ENCODE measurements at regions of chr9 and their contacts with region 1.

Region 1: DNA sequence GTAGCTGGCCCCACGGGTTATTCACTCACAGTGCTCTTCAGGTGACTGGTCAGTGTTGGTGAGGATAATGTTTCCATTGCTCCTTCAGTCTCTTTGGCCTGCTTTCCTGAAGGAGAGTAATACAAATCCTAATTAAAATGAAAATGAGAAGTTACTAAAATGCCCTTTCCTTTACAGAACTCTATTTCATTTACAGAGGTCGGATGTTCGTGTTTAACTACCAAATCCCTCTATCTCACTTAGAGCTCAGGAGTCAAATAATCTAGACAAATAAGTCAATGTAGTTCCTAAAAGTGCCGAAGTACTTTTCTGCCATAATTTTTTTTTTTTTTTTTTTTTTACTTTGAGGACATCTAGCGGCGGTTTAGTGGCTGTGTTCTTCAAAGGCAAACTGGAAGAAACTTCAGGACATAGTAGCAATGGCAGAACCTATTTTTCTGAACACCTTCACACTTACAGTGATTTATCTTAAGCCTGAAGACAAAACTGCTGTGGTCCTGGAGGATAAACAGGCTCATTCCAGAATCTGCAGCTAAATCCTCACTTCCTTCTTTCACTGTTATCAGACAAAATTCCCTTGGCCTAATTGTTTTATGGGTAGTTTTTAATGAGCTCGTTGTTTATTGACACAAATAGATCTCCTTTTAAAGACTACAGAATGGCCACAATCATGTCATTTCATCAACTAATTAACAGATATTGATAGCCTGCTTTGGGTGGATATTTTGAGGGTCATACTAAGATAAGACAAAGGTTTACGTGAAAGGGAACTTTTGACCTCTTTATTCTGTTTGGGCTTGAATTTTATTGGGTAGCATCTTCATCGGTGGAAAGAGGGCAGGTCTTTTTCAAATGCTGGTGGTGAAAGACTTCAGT is 207.6 kb upstream of the DMRTA1 start:
- DNase-seq: peak; percentile 33
- H3K4me3 Mint-ChIP-seq: peak overlapping the region; percentile 50
- H3K27ac Mint-ChIP-seq: peak overlapping the region; percentile 86
- H3K4me1 Mint-ChIP-seq: peaks cover 37% of the 10 kb centered on the region
- H3K27me3 Mint-ChIP-seq: no peaks in the 10 kb centered on the region
- CTCF ChIP-seq: no peak

Region 2: GRCh38 chr9:21465859-21466518 is 773.1 kb before region 1 on chr9:
- CTCF ChIA-PET with region 1: interaction called, 26 read pairs
- POLR2A ChIA-PET with region 1: interaction called, 3 read pairs
- intact Hi-C with region 1: loop called (anchors 10 kb)
- DNase-seq: peak; percentile 47
- H3K4me3 Mint-ChIP-seq: no peak overlapping the region
- H3K27ac Mint-ChIP-seq: no peak overlapping the region
- H3K4me1 Mint-ChIP-seq: no peaks in the 10 kb centered on the region
- H3K27me3 Mint-ChIP-seq: no peaks in the 10 kb centered on the region
- CTCF ChIP-seq: peak; percentile 38

Region 3: DNA sequence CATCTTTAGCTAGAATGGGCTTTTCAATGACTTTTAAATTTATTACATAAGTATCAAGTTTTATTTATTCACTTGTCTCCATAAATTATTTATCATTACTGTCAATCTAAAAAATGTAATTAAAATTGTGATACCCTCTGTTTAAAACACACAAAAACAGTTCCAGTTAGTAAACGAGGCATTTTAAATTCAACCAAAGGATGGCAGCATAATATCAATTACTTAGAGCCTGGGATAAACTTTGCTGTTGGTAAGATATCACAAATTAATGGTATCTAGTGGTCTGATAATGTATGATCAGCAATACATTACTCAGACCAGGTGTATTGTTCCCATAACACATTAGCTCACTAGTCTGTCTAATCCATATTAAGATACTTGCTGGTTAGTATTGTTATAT is 747.3 kb before region 1 on chr9:
- CTCF ChIA-PET with region 1: interaction called, 13 read pairs
- POLR2A ChIA-PET with region 1: no interaction called
- intact Hi-C with region 1: loop called (anchors 10 kb)
- DNase-seq: no peak
- H3K4me3 Mint-ChIP-seq: no peak overlapping the region
- H3K27ac Mint-ChIP-seq: no peak overlapping the region
- H3K4me1 Mint-ChIP-seq: peaks cover 7% of the 10 kb centered on the region
- H3K27me3 Mint-ChIP-seq: no peaks in the 10 kb centered on the region
- CTCF ChIP-seq: no peak

Region 4: GRCh38 chr9:21681641-21682040 is 557.4 kb before region 1 on chr9:
- CTCF ChIA-PET with region 1: interaction called, 10 read pairs
- POLR2A ChIA-PET with region 1: interaction called, 4 read pairs
- intact Hi-C with region 1: no loop called
- DNase-seq: peak; percentile 31
- H3K4me3 Mint-ChIP-seq: no peak overlapping the region
- H3K27ac Mint-ChIP-seq: peak overlapping the region; percentile 85
- H3K4me1 Mint-ChIP-seq: peaks cover 13% of the 10 kb centered on the region
- H3K27me3 Mint-ChIP-seq: no peaks in the 10 kb centered on the region
- CTCF ChIP-seq: no peak